ENCODE measurements at regions of chr9 and their contacts with region 1.

Region 1: DNA sequence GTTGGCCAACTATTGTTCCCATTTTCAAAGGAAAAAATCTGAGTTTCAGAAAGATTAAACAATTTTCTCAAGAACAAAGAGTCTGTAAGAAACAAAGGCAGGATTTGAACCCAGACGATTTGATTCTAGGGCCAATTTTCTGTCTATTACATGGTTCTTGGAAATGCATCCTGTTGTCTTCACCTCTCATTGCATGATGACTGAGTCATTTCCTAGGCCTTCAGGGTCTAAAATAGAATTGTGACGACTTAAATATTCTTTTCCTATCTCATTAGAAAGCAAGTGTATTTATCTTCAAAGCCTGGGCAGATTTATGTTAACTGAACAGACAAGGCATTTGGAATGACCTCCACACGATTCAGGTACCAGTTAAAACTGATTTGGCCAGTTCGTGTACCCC is 512.9 kb downstream of the NTRK2 start:
- DNase-seq: no peak
- H3K4me3 Mint-ChIP-seq: no peak overlapping the region
- H3K27ac Mint-ChIP-seq: no peak overlapping the region
- H3K4me1 Mint-ChIP-seq: no peaks in the 10 kb centered on the region
- H3K27me3 Mint-ChIP-seq: no peaks in the 10 kb centered on the region

Region 2: DNA sequence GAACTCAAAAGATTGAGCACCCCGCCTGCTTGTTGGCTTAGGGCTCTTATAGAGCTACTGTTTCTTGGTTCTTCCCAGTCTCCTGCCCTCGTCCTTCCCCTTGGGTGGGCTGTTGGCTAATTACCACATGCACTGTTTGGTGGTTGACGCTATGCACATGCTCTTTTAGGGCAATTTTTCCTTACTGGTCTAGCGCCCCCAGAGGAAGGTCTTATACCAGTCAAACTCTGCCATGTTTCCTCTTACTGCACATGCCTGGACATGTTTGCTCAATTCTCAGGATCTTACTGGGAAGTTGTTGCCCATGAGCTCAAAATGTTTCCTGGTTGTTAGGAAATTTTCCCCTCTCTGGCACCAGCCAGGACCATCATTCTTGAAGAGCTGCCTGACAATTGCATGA is 943.7 kb before region 1 on chr9:
- intact Hi-C with region 1: loop called (anchors 5 kb)
- DNase-seq: no peak
- H3K4me3 Mint-ChIP-seq: no peak overlapping the region
- H3K27ac Mint-ChIP-seq: no peak overlapping the region
- H3K4me1 Mint-ChIP-seq: no peaks in the 10 kb centered on the region
- H3K27me3 Mint-ChIP-seq: peaks cover 9% of the 10 kb centered on the region